Naive thymus-derived CD4-positive, alpha-beta T cell (primary cell): ENCODE measurements at regions of chrX and their contacts with region 1.

Region 1: DNA sequence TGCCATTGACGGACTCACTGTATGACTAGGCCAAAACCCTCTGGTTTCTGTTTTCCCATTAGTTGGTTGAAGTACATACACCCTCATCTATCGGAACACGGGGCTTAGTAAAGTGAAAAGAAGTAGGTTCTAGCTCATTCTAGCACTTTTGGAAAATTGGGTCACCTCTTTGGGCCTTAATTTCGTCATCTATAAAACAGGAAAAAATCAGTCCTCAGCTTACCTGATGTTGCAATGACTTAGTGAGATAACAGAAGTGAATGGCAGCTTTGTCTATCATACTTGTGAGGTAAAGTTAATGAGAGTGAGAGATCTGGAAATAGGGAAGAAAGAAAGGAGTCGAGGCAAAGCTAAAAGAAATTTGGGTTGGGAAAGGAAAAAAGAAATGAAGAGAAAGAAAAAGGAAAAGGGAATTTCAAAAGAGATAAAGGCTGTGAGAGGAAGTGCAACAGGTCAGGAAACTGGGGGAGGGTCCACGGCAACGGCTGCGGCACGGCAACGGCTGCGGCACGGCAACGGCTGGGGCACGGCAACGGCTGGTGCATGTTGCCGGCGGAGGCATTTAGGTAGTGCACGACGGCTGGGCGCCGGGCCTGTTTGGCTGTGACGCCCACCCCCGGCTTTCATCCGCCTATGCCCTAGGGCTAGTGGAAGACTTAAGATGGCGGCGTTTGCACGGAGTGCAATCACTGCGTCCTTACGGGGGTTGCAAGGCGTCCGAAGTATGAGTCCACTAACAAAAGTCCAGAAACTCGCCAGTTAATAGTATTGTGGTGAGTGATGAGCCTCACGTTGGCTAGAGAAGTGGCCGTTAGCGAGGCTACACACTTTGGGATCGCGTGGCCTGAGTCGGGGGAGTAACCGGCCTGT is 360.1 kb upstream of the ZCCHC13 start:
- DNase-seq: peak; percentile 67 to 92 (median 87)
- ATAC-seq: peak; percentile 100
- H3K4me3 ChIP-seq: peak overlapping the region; percentile 98
- H3K4me3 Mint-ChIP-seq: peak overlapping the region; percentile 82 to 98 (median 94)
- H3K27ac ChIP-seq: peak overlapping the region; percentile 93
- H3K27ac Mint-ChIP-seq: peak overlapping the region; percentile 89 to 99 (median 96)
- H3K4me1 ChIP-seq: peaks cover 0 to 10% of the 10 kb centered on the region in 2 donors
- H3K4me1 Mint-ChIP-seq: peaks cover 12 to 49% (median 27%) of the 10 kb centered on the region in 7 donors
- H3K27me3 ChIP-seq: no peaks in the 10 kb centered on the region
- H3K27me3 Mint-ChIP-seq: peaks cover 0 to 2% (median 0%) of the 10 kb centered on the region in 5 donors

Region 2: GRCh38 chrX:72269671-72270251 is 1674.2 kb before region 1 on chrX:
- CTCF ChIA-PET with region 1: no interaction called
- POLR2A ChIA-PET with region 1: no interaction called
- intact Hi-C with region 1: loop called in 1 of 2 experiments (anchors 10 kb)
- DNase-seq: no peak
- ATAC-seq: no peak
- H3K4me3 ChIP-seq: no peak overlapping the region
- H3K4me3 Mint-ChIP-seq: no peak overlapping the region
- H3K27ac ChIP-seq: no peak overlapping the region
- H3K27ac Mint-ChIP-seq: peak overlapping the region in 3 of 9 donors; percentile 33 to 78 (median 38)
- H3K4me1 ChIP-seq: peaks cover 6 to 17% of the 10 kb centered on the region in 2 donors
- H3K4me1 Mint-ChIP-seq: peaks cover 10 to 41% (median 24%) of the 10 kb centered on the region in 7 donors
- H3K27me3 ChIP-seq: no peaks in the 10 kb centered on the region
- H3K27me3 Mint-ChIP-seq: no peaks in the 10 kb centered on the region

Region 3: DNA sequence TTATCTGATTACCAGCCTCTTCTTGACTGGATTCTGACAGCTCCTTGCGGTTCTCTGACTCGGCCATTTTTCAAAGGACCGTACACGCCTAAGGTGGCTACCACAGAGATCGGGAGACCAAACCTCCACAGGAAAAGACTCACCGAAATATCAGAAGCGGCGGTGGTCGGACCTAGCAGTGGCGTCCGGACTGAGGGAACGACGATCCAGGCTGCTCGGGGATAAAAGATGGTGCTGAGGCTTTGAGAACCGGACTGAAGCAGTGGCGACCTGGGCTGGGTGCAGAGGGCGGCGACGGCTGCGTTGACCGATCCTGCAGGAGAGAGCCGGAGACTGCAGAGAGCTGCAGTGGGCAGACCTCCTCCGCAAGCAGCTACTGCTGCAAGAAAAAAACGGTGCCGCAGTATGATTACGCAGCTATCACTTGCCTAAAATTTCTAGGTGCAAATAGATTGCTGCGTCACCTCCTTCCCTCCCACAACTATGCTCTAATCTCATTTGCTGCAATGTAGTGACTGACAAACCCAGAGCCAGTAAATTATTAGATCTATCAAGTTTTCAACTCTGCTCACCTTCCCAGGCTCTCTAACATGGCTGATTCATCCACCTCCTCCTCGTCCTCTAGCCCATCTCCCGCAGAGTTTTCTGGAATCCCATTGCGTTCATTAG is 729.4 kb before region 1 on chrX and contains the start of gene NAP1L2:
- CTCF ChIA-PET with region 1: no interaction called
- POLR2A ChIA-PET with region 1: no interaction called
- intact Hi-C with region 1: loop called in 1 of 2 experiments (anchors 5 kb)
- DNase-seq: peak; percentile 3 to 64 (median 47)
- ATAC-seq: peak; percentile 92
- H3K4me3 ChIP-seq: peak within 1 kb of the TSS; percentile 77
- H3K4me3 Mint-ChIP-seq: peak within 1 kb of the TSS; percentile 87 to 95 (median 90)
- H3K27ac ChIP-seq: peak within 1 kb of the TSS; percentile 74
- H3K27ac Mint-ChIP-seq: peak within 1 kb of the TSS; percentile 68 to 94 (median 87)
- H3K4me1 ChIP-seq: no peaks in the 10 kb centered on the region
- H3K4me1 Mint-ChIP-seq: peaks cover 5 to 26% (median 14%) of the 10 kb centered on the region in 7 donors
- H3K27me3 ChIP-seq: no peaks in the 10 kb centered on the region
- H3K27me3 Mint-ChIP-seq: peaks cover 0 to 11% (median 4%) of the 10 kb centered on the region in 5 donors
- total RNA-seq, gene NAP1L2: 2.5 to 17.4 (median 2.8) TPM

Region 4: GRCh38 chrX:73977534-73978169 is 33.7 kb after region 1 on chrX:
- CTCF ChIA-PET with region 1: no interaction called
- POLR2A ChIA-PET with region 1: interaction called, 4 read pairs
- intact Hi-C with region 1: loop called (anchors 1 to 5 kb)
- DNase-seq: peak in 7 of 9 donors; percentile 51 to 82 (median 69)
- ATAC-seq: peak; percentile 94
- H3K4me3 ChIP-seq: no peak overlapping the region
- H3K4me3 Mint-ChIP-seq: peak overlapping the region; percentile 18 to 71 (median 55)
- H3K27ac ChIP-seq: peak overlapping the region; percentile 68
- H3K27ac Mint-ChIP-seq: peak overlapping the region; percentile 66 to 92 (median 85)
- H3K4me1 ChIP-seq: peaks cover 13 to 19% of the 10 kb centered on the region in 2 donors
- H3K4me1 Mint-ChIP-seq: peaks cover 17 to 90% (median 64%) of the 10 kb centered on the region in 7 donors
- H3K27me3 ChIP-seq: no peaks in the 10 kb centered on the region
- H3K27me3 Mint-ChIP-seq: no peaks in the 10 kb centered on the region

Region 5: GRCh38 chrX:74536152-74536831 is 592.4 kb after region 1 on chrX:
- CTCF ChIA-PET with region 1: no interaction called
- POLR2A ChIA-PET with region 1: no interaction called
- intact Hi-C with region 1: loop called in 1 of 2 experiments (anchors 5 kb)
- DNase-seq: peak in 6 of 9 donors; percentile 6 to 35 (median 12)
- ATAC-seq: peak; percentile 73
- H3K4me3 ChIP-seq: peak overlapping the region; percentile 63
- H3K4me3 Mint-ChIP-seq: peak overlapping the region; percentile 75 to 89 (median 85)
- H3K27ac ChIP-seq: peak overlapping the region; percentile 54
- H3K27ac Mint-ChIP-seq: peak overlapping the region in 8 of 9 donors; percentile 51 to 80 (median 68)
- H3K4me1 ChIP-seq: peaks cover 0 to 3% of the 10 kb centered on the region in 2 donors
- H3K4me1 Mint-ChIP-seq: peaks cover 0 to 18% (median 7%) of the 10 kb centered on the region in 7 donors
- H3K27me3 ChIP-seq: no peaks in the 10 kb centered on the region
- H3K27me3 Mint-ChIP-seq: no peaks in the 10 kb centered on the region

Region 6: GRCh38 chrX:75623535-75623934 is 1679.6 kb after region 1 on chrX:
- CTCF ChIA-PET with region 1: no interaction called
- POLR2A ChIA-PET with region 1: no interaction called
- intact Hi-C with region 1: no loop called
- DNase-seq: no peak
- ATAC-seq: no peak
- H3K4me3 ChIP-seq: no peak overlapping the region
- H3K4me3 Mint-ChIP-seq: no peak overlapping the region
- H3K27ac ChIP-seq: no peak overlapping the region
- H3K27ac Mint-ChIP-seq: no peak overlapping the region
- H3K4me1 ChIP-seq: no peaks in the 10 kb centered on the region
- H3K4me1 Mint-ChIP-seq: no peaks in the 10 kb centered on the region
- H3K27me3 ChIP-seq: no peaks in the 10 kb centered on the region
- H3K27me3 Mint-ChIP-seq: no peaks in the 10 kb centered on the region